HEK293T (cell line): ENCODE measurements at regions of chr15 and their contacts with region 1.

Region 1: DNA sequence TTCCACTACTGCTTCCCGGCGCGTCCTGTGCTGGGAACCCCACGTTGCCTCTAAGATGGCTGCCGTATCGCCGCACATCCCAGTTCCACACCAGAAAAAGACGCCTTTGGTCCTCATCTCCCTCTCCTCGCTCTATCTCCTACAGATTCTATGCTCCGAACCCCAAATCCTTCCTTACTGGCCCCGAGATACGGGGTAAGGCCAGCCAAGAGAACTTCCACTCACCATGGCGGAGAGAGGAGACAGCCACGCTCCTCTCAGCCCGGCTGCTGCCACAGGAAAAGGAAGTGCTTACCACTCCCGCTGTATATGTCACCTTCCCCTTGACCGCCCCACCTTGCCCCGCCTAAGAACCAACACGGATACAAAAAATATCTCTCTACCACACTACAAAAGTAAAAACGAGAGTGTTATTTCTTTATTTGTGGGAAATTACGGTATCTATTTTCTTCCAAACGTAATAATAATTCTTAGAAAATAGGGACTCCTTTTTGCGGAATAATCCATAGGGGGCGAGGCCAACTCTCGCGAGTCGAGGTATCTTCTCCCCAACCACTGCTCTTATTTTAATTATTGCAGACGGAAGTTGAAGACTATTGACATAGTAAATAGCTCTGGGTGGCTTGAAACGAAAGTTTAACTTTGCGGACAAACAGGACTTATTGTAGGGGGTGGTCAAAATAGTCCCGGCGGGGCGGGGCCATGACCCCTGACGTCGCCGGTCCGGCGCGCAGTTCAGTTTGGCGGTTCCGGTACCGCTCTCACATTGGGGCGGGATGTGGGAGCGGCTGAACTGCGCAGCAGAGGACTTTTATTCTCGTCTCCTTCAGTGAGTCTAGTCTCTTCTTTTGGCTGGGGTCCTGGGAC is at the starts of genes RPL4 and ZWILCH:
- DNase-seq: peak; percentile 64

Region 2: DNA sequence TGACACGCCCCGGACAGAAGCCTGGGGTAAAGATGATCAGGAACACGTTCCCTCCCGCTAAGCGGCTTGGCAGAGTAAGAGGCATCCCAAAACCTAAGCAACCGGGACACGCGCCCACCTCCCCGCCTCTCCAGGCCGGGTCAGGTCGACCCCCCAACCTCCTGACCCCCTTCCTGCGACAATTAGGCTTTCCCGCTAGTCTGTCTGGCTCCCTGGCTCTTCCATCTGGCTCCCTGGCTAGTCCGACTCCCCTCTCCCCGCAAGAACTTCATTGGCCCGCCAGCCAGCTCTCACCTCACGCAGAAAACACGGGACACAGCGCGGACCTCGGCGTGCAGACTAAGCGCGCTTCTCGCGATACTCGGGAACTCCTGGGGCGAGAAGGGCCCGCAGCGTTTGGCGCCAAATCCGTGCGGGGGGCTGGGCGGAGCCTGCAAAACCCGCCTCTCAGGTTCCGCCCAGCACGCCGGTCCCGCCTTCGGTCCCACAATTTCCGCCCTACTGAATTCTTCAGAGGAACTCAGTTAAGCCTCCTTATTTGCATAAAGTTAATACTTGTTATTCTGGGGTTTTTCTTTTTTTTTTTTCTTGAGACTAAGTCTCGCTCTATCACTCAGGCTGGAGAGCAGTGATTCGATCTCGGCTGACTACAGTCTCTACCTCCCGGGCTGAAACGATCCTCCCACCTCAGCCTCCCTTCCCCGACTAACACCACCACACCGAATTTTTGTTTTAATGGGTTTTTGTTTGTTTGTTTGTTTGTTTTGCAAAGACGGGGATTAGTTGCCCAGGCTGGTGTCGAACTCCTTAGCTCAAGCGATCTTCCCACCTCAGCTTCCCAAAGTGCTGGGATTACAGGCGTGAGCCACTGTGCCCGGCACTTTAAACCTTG is 148.2 kb before region 1 on chr15 and contains the start of gene TIPIN:
- CTCF ChIA-PET with region 1: no interaction called
- POLR2A ChIA-PET with region 1: interaction called, 16 read pairs
- DNase-seq: peak; percentile 95

Region 3: DNA sequence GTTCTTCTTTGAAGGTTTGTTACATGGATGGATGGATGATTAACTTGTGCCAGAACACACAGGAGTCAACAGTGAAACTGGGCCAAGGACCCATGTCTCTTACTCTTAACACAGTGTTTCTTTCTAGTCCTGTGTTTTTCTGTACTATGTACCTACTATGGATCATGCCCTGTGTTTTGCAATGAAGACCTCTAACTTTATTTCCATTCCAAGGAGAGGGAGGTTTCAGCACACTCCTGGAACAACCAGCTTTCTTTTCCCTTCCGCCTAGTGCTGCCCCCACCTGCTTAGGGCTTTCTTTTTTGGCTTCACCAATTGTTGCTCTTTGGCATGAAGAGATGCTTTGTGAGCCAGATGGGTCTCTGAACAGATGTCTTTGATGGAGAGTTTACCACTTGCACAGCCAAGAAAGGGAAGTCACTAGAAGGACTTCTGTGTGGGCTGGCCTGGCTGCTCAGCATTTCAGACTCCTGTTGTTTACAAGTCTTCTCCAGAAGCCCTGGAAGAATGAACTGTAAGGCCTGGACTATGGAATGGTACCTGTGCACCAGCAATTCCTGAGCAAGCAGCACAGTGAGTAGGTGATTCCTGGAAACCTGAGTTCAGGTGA is 51.7 kb before region 1 on chr15:
- CTCF ChIA-PET with region 1: no interaction called
- POLR2A ChIA-PET with region 1: no interaction called
- DNase-seq: no peak

Region 4: DNA sequence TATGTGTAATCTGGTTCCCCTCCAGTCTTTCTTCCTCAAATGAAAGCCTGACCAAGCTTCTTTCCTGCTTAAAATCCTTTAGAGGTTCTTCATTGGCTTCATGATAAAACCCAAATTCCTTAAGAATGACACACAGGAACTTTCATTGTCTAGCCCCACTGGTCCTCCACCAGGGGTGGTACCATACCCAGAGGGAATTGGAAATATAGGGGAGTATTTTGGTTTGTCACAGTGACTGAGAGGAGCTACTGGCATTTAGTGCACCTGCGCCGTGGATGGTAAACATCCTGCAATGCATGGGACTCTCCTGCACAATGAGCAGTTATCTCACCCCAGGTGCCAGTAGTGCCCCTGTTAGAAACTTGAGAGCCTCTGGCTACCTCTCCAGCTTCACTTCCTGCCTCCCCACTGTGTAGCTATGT is 11.1 kb after region 1 on chr15:
- CTCF ChIA-PET with region 1: no interaction called
- POLR2A ChIA-PET with region 1: interaction called, 10 read pairs
- DNase-seq: no peak

Region 5: GRCh38 chr15:66524838-66525237 is 20.0 kb after region 1 on chr15:
- CTCF ChIA-PET with region 1: no interaction called
- POLR2A ChIA-PET with region 1: interaction called, 10 read pairs
- DNase-seq: no peak